Heart left ventricle (tissue), 16 donors: ENCODE measurements at regions of chr1 and their contacts with region 1.

Region 1: GRCh38 chr1:101971304-101971703 is 25.4 kb downstream of the OLFM3 start:
- DNase-seq: no peak
- ATAC-seq: no peak
- H3K4me3 ChIP-seq: no peak overlapping the region
- H3K27ac ChIP-seq: no peak overlapping the region
- H3K4me1 ChIP-seq: no peaks in the 10 kb centered on the region
- H3K27me3 ChIP-seq: no peaks in the 10 kb centered on the region
- CTCF ChIP-seq: peak in 5 of 12 donors; percentile 12 to 29 (median 23)
- POLR2A ChIP-seq: no peak

Region 2: GRCh38 chr1:101820071-101820470 is 151.2 kb before region 1 on chr1:
- intact Hi-C with region 1: loop called in 2 of 10 experiments (anchors 2 kb)
- DNase-seq: no peak
- ATAC-seq: peak in 3 of 4 donors; percentile 53 to 76 (median 61)
- H3K4me3 ChIP-seq: no peak overlapping the region
- H3K27ac ChIP-seq: no peak overlapping the region
- H3K4me1 ChIP-seq: no peaks in the 10 kb centered on the region
- H3K27me3 ChIP-seq: no peaks in the 10 kb centered on the region
- CTCF ChIP-seq: peak in 11 of 12 donors; percentile 26 to 61 (median 50)
- POLR2A ChIP-seq: no peak

Region 3: DNA sequence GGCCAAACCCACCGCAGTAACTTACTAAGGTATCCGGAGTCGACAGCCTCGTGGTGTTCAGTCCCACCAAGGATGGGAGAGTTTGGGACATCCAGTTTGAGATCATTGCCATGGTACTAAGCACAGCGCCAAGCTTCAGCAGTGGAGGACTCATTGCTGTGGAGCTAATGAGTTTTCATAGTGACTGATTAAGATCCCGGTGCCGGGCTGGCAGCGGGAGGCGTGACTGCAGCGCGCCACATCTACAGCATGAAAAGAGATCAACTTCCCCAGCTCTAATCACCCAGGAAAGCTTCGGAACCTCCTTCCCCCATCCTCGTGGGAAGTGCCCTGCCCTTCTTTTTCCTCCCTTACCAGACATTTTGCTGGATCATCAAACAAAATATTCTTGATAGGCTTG is 124.5 kb before region 1 on chr1:
- intact Hi-C with region 1: loop called in 1 of 10 experiments (anchors 10 kb)
- DNase-seq: peak in 1 of 5 donors; percentile 18
- ATAC-seq: no peak
- H3K4me3 ChIP-seq: peak overlapping the region in 1 of 12 donors; percentile 24
- H3K27ac ChIP-seq: no peak overlapping the region
- H3K4me1 ChIP-seq: peaks cover 0 to 3% (median 0%) of the 10 kb centered on the region in 12 donors
- H3K27me3 ChIP-seq: peaks cover 0 to 16% (median 0%) of the 10 kb centered on the region in 9 donors
- CTCF ChIP-seq: no peak
- POLR2A ChIP-seq: no peak

Region 4: GRCh38 chr1:101898137-101898536 is 73.2 kb before region 1 on chr1:
- intact Hi-C with region 1: no loop called
- DNase-seq: no peak
- ATAC-seq: no peak
- H3K4me3 ChIP-seq: no peak overlapping the region
- H3K27ac ChIP-seq: no peak overlapping the region
- H3K4me1 ChIP-seq: no peaks in the 10 kb centered on the region
- H3K27me3 ChIP-seq: no peaks in the 10 kb centered on the region
- CTCF ChIP-seq: no peak
- POLR2A ChIP-seq: no peak

Region 5: DNA sequence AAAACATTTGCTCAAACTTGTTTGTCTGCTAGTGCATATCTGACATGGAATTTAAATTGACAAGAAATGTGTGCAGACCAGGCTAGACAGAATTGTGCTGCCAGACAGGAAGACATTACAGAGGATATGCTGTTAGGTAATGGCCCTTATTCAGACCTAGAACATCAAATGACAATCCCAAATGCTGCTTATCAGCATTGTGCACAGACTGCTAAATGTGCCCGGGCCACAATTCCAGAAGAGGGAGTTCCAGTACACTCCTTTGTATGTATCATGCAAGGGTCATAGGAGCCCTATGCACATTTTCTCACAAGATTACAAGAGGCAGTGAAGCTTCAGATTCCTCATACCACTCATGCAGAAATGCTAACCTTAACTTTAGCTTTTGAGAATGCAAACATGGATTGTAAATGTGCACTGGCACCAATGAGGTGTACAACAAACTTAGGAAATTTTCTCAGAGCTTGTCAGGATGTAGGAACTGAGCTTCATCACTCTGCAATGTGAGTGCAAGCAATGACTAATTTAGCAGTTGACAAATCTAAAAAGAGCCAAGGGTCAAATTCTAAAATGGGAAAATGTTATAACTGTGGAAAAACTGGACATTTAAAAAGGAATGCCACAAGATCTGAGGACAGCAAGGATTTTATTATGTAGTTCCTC is 863.5 kb after region 1 on chr1:
- intact Hi-C with region 1: no loop called
- DNase-seq: no peak
- ATAC-seq: no peak
- H3K4me3 ChIP-seq: no peak overlapping the region
- H3K27ac ChIP-seq: no peak overlapping the region
- H3K4me1 ChIP-seq: no peaks in the 10 kb centered on the region
- H3K27me3 ChIP-seq: no peaks in the 10 kb centered on the region
- CTCF ChIP-seq: no peak
- POLR2A ChIP-seq: no peak